ENCODE measurements at regions of chr10 and their contacts with region 1.

Region 1: DNA sequence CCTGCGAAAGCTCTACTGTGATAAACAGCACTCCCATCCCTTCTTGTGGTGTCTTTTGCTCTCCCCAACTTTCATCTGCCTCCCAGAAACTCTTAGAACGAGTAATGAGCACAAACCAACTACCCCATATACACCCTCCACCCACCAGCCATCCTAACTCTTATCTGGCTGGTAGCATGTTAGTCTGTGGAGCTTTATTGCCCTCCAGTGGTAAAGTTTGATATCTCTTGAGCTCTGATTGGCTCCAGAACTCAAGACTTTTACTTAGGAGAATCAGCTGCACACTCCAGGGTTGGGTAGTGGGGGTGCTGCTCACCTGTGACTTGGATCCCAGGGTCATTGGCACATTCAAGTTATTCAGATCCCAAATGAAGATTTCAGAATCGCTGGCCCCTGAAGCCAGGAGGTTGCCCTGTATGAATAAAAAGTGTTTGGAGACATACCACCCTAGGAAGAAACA is 10.9 kb downstream of the SEC31B start:
- DNase-seq: peak; percentile 76
- H3K4me3 ChIP-seq: no peak overlapping the region
- H3K27ac ChIP-seq: no peak overlapping the region
- H3K4me1 ChIP-seq: no peaks in the 10 kb centered on the region
- H3K27me3 ChIP-seq: no peaks in the 10 kb centered on the region
- CTCF ChIP-seq: peak; percentile 72

Region 2: GRCh38 chr10:100303724-100304319 is 204.9 kb before region 1 on chr10:
- CTCF ChIA-PET with region 1: interaction called, 7 read pairs
- POLR2A ChIA-PET with region 1: no interaction called
- intact Hi-C with region 1: loop called (anchors 10 kb)
- DNase-seq: peak; percentile 48
- H3K4me3 ChIP-seq: no peak overlapping the region
- H3K27ac ChIP-seq: no peak overlapping the region
- H3K4me1 ChIP-seq: no peaks in the 10 kb centered on the region
- H3K27me3 ChIP-seq: no peaks in the 10 kb centered on the region
- CTCF ChIP-seq: peak; percentile 76

Region 3: GRCh38 chr10:100338434-100339036 is 170.2 kb before region 1 on chr10:
- CTCF ChIA-PET with region 1: no interaction called
- POLR2A ChIA-PET with region 1: no interaction called
- intact Hi-C with region 1: loop called (anchors 5 kb)
- DNase-seq: peak; percentile 79
- H3K4me3 ChIP-seq: no peak overlapping the region
- H3K27ac ChIP-seq: no peak overlapping the region
- H3K4me1 ChIP-seq: no peaks in the 10 kb centered on the region
- H3K27me3 ChIP-seq: no peaks in the 10 kb centered on the region
- CTCF ChIP-seq: peak; percentile 88

Region 4: DNA sequence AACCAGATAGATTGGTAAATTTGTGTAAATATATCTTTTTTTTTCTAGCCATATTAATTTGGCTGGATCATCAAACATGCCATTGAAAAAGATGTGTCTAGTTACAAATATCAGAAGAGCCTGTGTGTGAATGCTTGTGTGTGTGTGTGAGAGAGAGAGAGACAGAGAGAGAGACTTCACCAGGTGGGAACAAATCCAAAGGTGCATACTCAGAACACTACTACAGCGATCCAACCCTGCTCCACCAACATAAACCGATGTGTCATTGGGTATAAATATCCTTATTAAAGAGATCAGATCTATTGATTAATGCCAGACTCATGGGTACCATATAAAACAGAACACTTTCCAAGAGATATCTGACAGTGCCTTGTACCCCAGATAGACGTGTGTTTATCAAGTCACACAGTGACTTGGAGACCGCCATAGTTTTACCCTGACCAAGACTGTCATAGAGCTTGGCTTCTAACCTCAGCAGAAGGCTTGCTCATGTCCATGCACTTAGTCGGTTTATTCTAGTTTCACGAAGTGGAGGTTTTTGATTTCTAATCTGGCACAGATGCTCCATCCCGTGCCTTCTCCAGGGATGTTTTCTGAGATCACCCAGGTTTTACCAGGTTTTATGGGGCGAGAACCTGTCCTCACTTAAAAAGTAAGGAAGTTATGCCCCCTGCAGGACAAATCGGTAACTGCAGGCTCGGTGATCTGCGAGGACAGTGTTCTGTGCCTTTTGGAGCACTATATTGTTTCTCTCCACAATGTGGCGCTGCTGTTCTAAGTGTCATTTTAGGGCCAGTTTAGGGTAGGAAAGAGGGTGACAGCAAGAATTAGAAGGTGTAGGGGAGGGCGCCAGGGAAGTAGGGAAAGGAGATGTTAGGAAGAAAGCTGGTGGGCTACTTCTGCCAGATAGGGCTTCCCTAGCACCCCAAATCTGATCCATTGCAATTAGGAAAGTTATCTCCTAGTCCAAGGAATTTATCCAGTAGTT is 75.2 kb before region 1 on chr10:
- CTCF ChIA-PET with region 1: interaction called, 19 read pairs
- POLR2A ChIA-PET with region 1: no interaction called
- intact Hi-C with region 1: loop called (anchors 2 kb)
- DNase-seq: peak; percentile 96
- H3K4me3 ChIP-seq: no peak overlapping the region
- H3K27ac ChIP-seq: no peak overlapping the region
- H3K4me1 ChIP-seq: no peaks in the 10 kb centered on the region
- H3K27me3 ChIP-seq: no peaks in the 10 kb centered on the region
- CTCF ChIP-seq: peak; percentile 100

Region 5: GRCh38 chr10:100518761-100519241 is 10.1 kb after region 1 on chr10:
- CTCF ChIA-PET with region 1: interaction called, 19 read pairs
- POLR2A ChIA-PET with region 1: no interaction called
- intact Hi-C with region 1: no loop called
- DNase-seq: peak; percentile 81
- H3K4me3 ChIP-seq: peak overlapping the region; percentile 50
- H3K27ac ChIP-seq: no peak overlapping the region
- H3K4me1 ChIP-seq: peaks cover 7% of the 10 kb centered on the region
- H3K27me3 ChIP-seq: no peaks in the 10 kb centered on the region
- CTCF ChIP-seq: peak; percentile 85